BJ (cell line): ENCODE measurements at regions of chr3 and their contacts with region 1.

Region 1: GRCh38 chr3:39288300-39288808 is 8.5 kb upstream of the CX3CR1 start:
- DNase-seq: no peak
- H3K4me3 ChIP-seq: no peak overlapping the region
- H3K27me3 ChIP-seq: no peaks in the 10 kb centered on the region
- CTCF ChIP-seq: peak; percentile 95

Region 2: DNA sequence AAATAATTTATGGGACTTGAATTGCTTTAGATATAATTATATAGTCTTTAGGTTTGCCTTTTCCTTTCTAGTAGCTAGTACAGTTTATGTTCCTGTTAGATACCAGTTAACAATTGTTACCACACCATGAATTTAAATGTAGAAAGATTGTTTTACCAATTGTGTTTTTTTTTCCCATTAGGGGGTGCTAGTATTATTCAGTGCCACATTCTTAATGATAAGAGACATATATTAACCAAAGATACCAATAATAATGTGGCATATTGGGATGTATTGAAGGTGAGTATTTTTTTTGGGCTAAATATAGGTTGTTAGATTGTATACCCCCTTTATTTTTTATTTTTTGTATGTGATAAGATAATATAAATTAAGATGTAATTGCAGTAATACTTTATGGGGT is 208.8 kb before region 1 on chr3:
- CTCF ChIA-PET with region 1: interaction called, 17 read pairs
- POLR2A ChIA-PET with region 1: no interaction called
- DNase-seq: no peak
- H3K4me3 ChIP-seq: no peak overlapping the region
- H3K27me3 ChIP-seq: no peaks in the 10 kb centered on the region
- CTCF ChIP-seq: no peak

Region 3: GRCh38 chr3:39107388-39108199 is 180.8 kb before region 1 on chr3 and contains the starts of genes GORASP1 and TTC21A:
- CTCF ChIA-PET with region 1: interaction called, 15 read pairs
- POLR2A ChIA-PET with region 1: no interaction called
- DNase-seq: peak; percentile 41
- H3K4me3 ChIP-seq: peak within 1 kb of the TSS; percentile 89
- H3K27me3 ChIP-seq: no peaks in the 10 kb centered on the region
- CTCF ChIP-seq: no peak
- polyA plus RNA-seq, gene GORASP1: 58.3 and 87.0 TPM in 2 replicates
- polyA plus RNA-seq, gene TTC21A: 2.3 and 3.1 TPM in 2 replicates

Region 4: DNA sequence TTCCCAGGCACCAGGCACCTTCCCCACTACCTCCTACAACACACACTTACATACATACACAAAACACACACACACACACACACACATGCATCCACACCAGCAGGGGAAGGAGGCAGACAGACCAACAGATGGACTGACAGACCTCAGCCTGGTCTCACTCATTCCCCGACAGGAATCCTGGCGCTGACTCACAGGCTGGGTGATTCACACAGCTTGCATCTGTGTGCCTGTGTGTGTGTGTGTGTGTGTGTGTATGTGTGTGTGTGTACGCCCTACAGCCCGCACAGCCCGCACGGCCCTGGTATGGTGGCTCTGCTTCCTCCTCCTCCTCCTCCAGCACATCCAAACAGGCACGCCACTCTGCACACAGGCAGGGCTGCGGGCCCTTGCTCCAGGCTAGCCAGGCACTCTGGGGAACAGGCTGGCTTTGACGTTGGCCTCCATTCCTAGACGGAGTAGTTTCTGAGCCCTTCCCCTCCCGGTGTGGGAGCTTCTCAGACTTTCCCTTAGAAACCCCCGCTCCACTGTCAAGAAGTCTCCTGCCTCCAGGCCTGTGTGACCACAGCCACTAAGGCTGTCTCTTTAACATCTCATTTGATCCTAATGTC is 141.3 kb before region 1 on chr3:
- CTCF ChIA-PET with region 1: interaction called, 14 read pairs
- POLR2A ChIA-PET with region 1: no interaction called
- DNase-seq: peak; percentile 77
- H3K4me3 ChIP-seq: no peak overlapping the region
- H3K27me3 ChIP-seq: no peaks in the 10 kb centered on the region
- CTCF ChIP-seq: no peak

Region 5: GRCh38 chr3:39202094-39202493 is 86.3 kb before region 1 on chr3:
- CTCF ChIA-PET with region 1: interaction called, 374 read pairs
- POLR2A ChIA-PET with region 1: no interaction called
- DNase-seq: no peak
- H3K4me3 ChIP-seq: no peak overlapping the region
- H3K27me3 ChIP-seq: peaks cover 11% of the 10 kb centered on the region
- CTCF ChIP-seq: no peak

Region 6: DNA sequence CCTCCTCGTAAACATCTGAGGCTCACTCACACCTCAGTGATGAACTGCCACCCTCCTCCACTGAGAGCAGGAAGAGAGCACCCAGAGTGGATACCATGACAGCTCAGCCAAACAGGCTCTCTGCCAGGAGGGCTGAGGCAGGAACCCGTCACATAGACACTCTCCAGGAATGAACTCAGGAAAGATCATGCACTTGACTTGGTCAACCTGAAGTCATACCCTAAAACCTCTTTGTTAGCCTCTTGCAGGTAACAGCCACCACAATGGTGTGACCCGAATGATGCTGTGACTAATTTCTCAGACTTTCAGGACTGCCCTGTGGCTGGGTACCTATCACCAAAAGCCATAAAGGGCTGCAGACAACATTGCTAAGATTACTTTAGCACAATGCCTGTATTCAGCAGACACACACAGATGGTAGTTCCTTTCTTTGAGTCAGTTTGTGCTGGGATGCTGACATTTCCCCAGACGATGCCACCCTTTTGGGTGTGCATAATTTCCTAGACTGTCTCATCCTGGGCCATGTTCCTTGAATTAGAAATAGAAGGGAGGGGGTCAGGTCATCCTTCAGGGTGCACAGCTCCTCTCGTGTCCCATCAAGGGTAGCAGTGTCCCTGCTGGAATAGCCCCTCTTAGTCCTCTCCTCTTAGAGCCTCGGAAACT is 38.8 kb before region 1 on chr3:
- CTCF ChIA-PET with region 1: interaction called, 11 read pairs
- POLR2A ChIA-PET with region 1: no interaction called
- DNase-seq: no peak
- H3K4me3 ChIP-seq: no peak overlapping the region
- H3K27me3 ChIP-seq: peaks cover 7% of the 10 kb centered on the region
- CTCF ChIP-seq: no peak